Activated B cell treated with CpG ODN at 0.5 μM for 24 hours (primary cell): ENCODE measurements at regions of chr20 and their contacts with region 1.

Region 1: GRCh38 chr20:39049684-39050554 is 87.8 kb downstream of the DHX35 start:
- DNase-seq: peak; percentile 83
- ATAC-seq: peak; percentile 87
- H3K4me3 Mint-ChIP-seq: peak overlapping the region; percentile 83
- H3K27ac Mint-ChIP-seq: peak overlapping the region; percentile 10
- H3K4me1 Mint-ChIP-seq: peaks cover 6% of the 10 kb centered on the region
- H3K27me3 Mint-ChIP-seq: peaks cover 5% of the 10 kb centered on the region
- CTCF ChIP-seq: no peak

Region 2: GRCh38 chr20:38645980-38646858 is 403.7 kb before region 1 on chr20:
- CTCF ChIA-PET with region 1: interaction called, 13 read pairs
- POLR2A ChIA-PET with region 1: no interaction called
- intact Hi-C with region 1: loop called (anchors 1 kb)
- DNase-seq: peak; percentile 93
- ATAC-seq: peak; percentile 98
- H3K4me3 Mint-ChIP-seq: peak overlapping the region; percentile 81
- H3K27ac Mint-ChIP-seq: no peak overlapping the region
- H3K4me1 Mint-ChIP-seq: peaks cover 22% of the 10 kb centered on the region
- H3K27me3 Mint-ChIP-seq: peaks cover 30% of the 10 kb centered on the region
- CTCF ChIP-seq: peak; percentile 45

Region 3: DNA sequence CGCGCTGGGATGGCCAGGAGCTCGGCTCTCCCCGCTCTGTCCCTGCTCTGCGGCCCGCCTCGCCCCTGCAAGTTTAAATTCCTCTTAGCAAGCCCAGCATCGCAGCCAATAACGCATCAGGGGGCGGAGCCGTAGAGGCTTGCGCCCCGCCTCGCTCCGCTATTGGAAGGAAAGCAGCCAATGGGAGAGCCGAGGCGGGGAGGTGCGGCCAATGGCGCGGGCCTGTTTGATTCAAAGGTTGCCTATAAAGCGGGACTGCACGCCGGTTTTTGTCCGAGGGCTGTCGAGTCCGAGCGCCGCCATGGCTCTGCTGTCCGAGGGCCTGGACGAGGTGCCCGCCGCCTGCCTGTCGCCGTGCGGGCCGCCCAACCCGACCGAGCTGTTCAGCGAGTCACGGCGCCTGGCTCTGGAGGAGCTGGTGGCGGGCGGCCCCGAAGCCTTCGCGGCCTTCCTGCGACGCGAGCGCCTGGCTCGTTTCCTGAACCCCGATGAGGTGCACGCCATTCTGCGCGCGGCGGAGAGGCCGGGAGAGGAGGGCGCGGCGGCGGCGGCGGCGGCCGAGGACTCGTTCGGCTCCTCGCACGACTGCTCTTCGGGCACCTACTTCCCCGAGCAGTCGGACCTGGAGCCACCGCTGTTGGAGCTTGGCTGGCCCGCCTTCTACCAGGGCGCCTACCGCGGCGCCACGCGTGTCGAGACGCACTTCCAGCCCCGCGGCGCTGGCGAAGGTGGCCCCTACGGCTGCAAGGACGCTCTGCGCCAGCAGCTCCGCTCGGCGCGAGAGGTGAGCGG is 123.6 kb before region 1 on chr20 and contains the start of gene FAM83D:
- CTCF ChIA-PET with region 1: interaction called, 17 read pairs
- POLR2A ChIA-PET with region 1: no interaction called
- intact Hi-C with region 1: loop called (anchors 1 kb)
- DNase-seq: peak; percentile 86
- ATAC-seq: peak; percentile 95
- H3K4me3 Mint-ChIP-seq: peak within 1 kb of the TSS; percentile 77
- H3K27ac Mint-ChIP-seq: peak within 1 kb of the TSS; percentile 65
- H3K4me1 Mint-ChIP-seq: peaks cover 12% of the 10 kb centered on the region
- H3K27me3 Mint-ChIP-seq: peaks cover 3% of the 10 kb centered on the region
- CTCF ChIP-seq: no peak
- total RNA-seq, gene FAM83D: 0.93 and 1.2 TPM in 2 replicates

Region 4: DNA sequence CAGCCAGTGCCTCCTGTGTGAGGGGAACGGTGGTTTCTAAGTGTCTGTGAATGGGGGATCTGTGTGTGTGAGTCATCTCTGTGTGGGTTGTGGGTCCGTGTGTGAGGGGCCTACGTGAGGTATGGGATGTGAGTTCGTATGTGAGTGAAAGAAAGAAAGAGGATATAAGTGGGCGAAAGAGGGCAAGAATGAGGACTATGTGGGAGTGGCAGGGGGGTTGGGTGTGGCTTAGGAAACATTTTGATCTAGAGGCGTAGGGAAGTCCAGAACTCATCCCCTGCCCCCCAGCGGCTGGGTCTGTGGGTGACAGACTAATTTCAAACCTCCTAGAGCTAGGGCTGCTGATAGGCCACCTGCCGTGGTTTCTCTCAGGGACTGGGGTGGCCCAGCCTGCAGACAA is 52.3 kb before region 1 on chr20:
- CTCF ChIA-PET with region 1: no interaction called
- POLR2A ChIA-PET with region 1: no interaction called
- intact Hi-C with region 1: no loop called
- DNase-seq: no peak
- ATAC-seq: peak; percentile 56
- H3K4me3 Mint-ChIP-seq: no peak overlapping the region
- H3K27ac Mint-ChIP-seq: no peak overlapping the region
- H3K4me1 Mint-ChIP-seq: peaks cover 4% of the 10 kb centered on the region
- H3K27me3 Mint-ChIP-seq: no peaks in the 10 kb centered on the region
- CTCF ChIP-seq: no peak

Region 5: DNA sequence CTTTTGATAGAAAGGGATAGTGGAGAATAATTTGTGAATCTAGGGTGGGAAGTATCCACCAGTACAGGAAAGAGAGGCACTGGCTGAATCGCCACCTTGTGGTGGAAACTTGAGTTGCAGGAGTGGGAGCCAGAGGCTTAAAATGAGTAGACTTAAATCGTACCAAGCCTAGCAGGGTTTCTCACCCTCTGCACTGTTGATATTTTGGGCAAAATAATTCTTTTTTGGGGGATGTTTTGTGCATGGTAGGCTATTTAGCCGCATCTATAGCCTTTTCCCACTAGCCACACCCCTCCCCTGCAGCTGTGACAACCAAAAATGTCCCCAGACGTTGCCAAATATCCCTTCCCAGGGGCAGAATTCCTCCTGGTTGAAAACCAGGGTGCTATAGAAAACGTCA is 31.3 kb after region 1 on chr20:
- CTCF ChIA-PET with region 1: interaction called, 101 read pairs
- POLR2A ChIA-PET with region 1: no interaction called
- intact Hi-C with region 1: loop called (anchors 1 kb)
- DNase-seq: peak; percentile 64
- ATAC-seq: peak; percentile 86
- H3K4me3 Mint-ChIP-seq: no peak overlapping the region
- H3K27ac Mint-ChIP-seq: no peak overlapping the region
- H3K4me1 Mint-ChIP-seq: no peaks in the 10 kb centered on the region
- H3K27me3 Mint-ChIP-seq: peaks cover 32% of the 10 kb centered on the region
- CTCF ChIP-seq: peak; percentile 87

Region 6: DNA sequence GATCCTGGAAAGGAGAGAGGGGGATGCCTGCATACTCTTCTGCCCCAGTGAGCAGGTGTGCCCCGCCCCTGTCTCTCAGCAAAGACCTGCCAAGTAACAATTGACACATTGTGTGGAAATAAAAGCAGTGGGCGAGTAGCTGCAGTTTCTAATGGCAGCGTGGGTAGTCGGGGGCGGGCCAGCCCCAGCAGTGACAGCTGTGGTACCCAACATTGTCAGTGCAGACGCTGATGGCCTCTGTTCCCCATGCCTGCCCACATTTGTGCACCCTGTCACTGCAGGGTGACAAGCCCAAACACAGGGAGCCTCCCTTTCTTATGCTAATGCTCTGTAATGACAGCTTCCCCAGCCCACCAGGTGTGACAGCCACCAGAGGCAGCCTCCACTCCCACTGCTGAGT is 404.0 kb after region 1 on chr20:
- CTCF ChIA-PET with region 1: no interaction called
- POLR2A ChIA-PET with region 1: no interaction called
- intact Hi-C with region 1: no loop called
- DNase-seq: no peak
- ATAC-seq: no peak
- H3K4me3 Mint-ChIP-seq: no peak overlapping the region
- H3K27ac Mint-ChIP-seq: no peak overlapping the region
- H3K4me1 Mint-ChIP-seq: peaks cover 22% of the 10 kb centered on the region
- H3K27me3 Mint-ChIP-seq: no peaks in the 10 kb centered on the region
- CTCF ChIP-seq: no peak